PC-3 (cell line): ENCODE measurements at regions of chr3 and their contacts with region 1.

Region 1: GRCh38 chr3:72887705-72888545 is at the start of gene GXYLT2:
- DNase-seq: peak; percentile 58
- ATAC-seq: peak; percentile 84
- H3K4me3 ChIP-seq: peak within 1 kb of the TSS; percentile 76
- H3K27ac ChIP-seq: no peak within 1 kb of the TSS
- H3K4me1 ChIP-seq: peaks cover 45% of the 10 kb centered on the region
- H3K27me3 ChIP-seq: no peaks in the 10 kb centered on the region
- CTCF ChIP-seq: no peak
- total RNA-seq, gene GXYLT2: 12.6 and 13.3 TPM in 2 replicates

Region 2: GRCh38 chr3:72844436-72844993 is 43.4 kb before region 1 on chr3:
- CTCF ChIA-PET with region 1: no interaction called
- POLR2A ChIA-PET with region 1: no interaction called
- intact Hi-C with region 1: no loop called
- DNase-seq: no peak
- ATAC-seq: no peak
- H3K4me3 ChIP-seq: no peak overlapping the region
- H3K27ac ChIP-seq: no peak overlapping the region
- H3K4me1 ChIP-seq: peaks cover 28% of the 10 kb centered on the region
- H3K27me3 ChIP-seq: no peaks in the 10 kb centered on the region
- CTCF ChIP-seq: no peak

Region 3: DNA sequence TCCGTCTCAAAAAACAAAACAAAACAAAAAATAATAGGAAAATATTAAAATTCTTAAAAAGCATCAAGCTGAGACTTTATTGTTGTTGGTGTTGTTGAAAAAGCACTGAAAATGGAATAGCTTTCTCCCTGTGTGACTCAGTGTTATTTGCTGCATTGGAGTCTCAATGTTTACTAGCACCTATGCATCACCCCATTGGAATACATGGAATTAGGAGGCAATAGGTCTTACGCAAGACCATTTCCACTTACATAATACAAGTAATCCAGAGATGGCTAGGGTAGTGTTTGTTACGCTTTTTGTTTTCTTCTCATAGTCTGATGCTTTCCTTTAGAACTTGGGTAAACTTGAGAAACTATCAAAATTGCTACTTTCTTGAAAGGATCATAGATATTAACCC is 15.1 kb after region 1 on chr3:
- CTCF ChIA-PET with region 1: no interaction called
- POLR2A ChIA-PET with region 1: interaction called, 25 read pairs
- intact Hi-C with region 1: no loop called
- DNase-seq: peak; percentile 72
- ATAC-seq: peak; percentile 74
- H3K4me3 ChIP-seq: no peak overlapping the region
- H3K27ac ChIP-seq: no peak overlapping the region
- H3K4me1 ChIP-seq: peaks cover 13% of the 10 kb centered on the region; the same call in 1 of the 2 replicates
- H3K27me3 ChIP-seq: no peaks in the 10 kb centered on the region
- CTCF ChIP-seq: no peak

Region 4: DNA sequence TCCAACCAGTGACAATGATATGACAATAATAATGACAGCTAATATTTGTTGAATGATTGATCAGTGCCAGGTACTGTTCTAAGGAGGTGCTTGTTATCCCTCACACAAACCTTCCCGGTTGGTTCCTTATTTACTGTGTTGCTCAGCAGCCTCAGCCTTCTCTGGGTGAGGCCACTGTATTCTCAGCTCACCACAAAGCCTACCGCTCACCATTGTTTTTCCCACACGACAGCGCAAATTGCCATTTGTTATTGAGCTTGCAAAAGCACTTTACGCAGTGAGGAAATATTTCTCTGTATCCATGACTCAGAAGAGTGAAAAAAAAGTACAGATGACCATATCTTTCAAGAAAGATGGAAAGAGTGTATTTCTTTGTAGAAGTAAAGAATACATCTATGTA is 786.4 kb after region 1 on chr3:
- CTCF ChIA-PET with region 1: no interaction called
- POLR2A ChIA-PET with region 1: no interaction called
- intact Hi-C with region 1: no loop called
- DNase-seq: no peak
- ATAC-seq: no peak
- H3K4me3 ChIP-seq: no peak overlapping the region
- H3K27ac ChIP-seq: no peak overlapping the region
- H3K4me1 ChIP-seq: no peaks in the 10 kb centered on the region
- H3K27me3 ChIP-seq: no peaks in the 10 kb centered on the region
- CTCF ChIP-seq: no peak